Dendritic cell treated with granulocyte-macrophage colony-stimulating factor and Interleukin-4, amounts not matched to agents 40 ng/mL and 50 ng/mL, for 4 days (primary cell): ENCODE measurements at regions of chr4 and their contacts with region 1.

Region 1: DNA sequence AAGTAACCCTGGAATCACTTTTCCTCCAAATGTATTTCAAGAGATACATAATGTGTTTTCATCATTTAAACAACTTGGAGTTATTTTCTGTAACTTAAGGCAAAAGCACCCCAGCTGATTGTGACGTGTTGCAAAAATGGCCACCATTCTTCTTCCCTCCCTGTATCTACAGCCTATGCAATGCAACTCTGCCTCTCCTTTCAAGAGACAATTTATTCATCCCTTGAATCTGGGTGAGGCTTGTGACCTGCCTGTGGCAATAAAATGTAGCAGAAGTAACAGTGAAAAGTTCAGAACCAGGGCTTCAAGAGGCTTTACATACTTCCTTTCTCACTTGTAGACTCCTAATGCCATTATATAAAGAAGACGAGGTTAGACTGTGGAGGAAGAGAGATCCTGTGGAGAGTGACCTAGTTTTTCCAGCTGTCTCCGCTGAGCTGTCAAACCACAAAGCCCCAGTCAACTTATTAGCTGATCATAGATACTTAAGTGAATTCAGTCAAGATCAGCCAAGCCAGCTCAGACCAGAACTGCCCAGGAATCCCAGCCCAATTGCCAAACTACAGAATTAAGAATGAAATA is 81.0 kb upstream of the KLF3 start:
- H3K4me3 Mint-ChIP-seq: no peak overlapping the region
- H3K27ac Mint-ChIP-seq: no peak overlapping the region
- H3K4me1 Mint-ChIP-seq: peaks cover 57% of the 10 kb centered on the region
- H3K27me3 Mint-ChIP-seq: peaks cover 12% of the 10 kb centered on the region

Region 2: DNA sequence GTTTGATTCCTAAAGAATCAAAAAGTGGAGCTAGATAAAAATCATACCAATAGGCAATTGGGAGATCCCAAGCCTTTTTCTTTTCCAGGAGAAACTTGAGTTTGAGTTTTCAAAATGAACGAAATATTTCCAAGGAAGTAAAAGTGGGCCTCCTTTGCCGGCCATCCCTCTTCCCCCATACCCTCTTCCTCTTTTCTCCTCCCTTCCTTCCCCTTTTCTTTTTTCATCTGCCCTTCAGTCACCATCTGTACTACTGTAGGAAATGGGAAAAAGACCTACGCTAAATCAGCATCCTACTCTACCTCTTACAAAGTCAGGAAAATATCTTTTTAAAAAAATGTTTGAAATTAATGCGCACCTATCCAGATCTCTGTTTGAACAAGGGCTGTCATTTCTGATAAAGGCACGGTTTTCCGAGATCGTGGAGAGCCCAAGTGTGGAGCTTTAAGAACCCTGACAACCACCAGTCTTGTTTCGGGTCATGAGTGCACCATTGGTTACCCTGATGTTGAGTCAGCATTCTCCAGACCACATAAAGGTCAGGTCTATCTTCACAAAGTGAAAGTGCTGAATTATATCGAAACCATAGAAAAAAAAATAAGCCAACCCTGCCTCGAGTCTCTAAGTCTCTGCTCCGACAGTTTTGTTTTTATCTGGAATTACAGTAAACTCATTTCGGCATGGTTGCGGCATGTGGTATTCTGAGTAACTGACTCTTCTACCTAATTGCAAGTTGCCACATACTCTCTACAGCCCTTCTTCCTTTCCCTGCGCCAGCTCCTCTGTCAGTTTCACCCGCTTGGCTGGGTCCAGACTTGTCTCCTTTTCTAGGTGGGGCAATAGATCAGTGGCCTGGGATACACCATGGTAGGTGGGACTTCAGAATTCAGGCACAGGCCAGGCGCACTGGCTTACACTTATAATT is 59.2 kb before region 1 on chr4:
- intact Hi-C with region 1: loop called (anchors 5 kb)
- H3K4me3 Mint-ChIP-seq: peak overlapping the region; percentile 52
- H3K27ac Mint-ChIP-seq: peak overlapping the region; percentile 83
- H3K4me1 Mint-ChIP-seq: peaks cover 72% of the 10 kb centered on the region
- H3K27me3 Mint-ChIP-seq: no peaks in the 10 kb centered on the region

Region 3: GRCh38 chr4:38534344-38535045 is 48.5 kb before region 1 on chr4:
- intact Hi-C with region 1: no loop called
- H3K4me3 Mint-ChIP-seq: no peak overlapping the region
- H3K27ac Mint-ChIP-seq: peak overlapping the region; percentile 77
- H3K4me1 Mint-ChIP-seq: peaks cover 50% of the 10 kb centered on the region
- H3K27me3 Mint-ChIP-seq: no peaks in the 10 kb centered on the region

Region 4: DNA sequence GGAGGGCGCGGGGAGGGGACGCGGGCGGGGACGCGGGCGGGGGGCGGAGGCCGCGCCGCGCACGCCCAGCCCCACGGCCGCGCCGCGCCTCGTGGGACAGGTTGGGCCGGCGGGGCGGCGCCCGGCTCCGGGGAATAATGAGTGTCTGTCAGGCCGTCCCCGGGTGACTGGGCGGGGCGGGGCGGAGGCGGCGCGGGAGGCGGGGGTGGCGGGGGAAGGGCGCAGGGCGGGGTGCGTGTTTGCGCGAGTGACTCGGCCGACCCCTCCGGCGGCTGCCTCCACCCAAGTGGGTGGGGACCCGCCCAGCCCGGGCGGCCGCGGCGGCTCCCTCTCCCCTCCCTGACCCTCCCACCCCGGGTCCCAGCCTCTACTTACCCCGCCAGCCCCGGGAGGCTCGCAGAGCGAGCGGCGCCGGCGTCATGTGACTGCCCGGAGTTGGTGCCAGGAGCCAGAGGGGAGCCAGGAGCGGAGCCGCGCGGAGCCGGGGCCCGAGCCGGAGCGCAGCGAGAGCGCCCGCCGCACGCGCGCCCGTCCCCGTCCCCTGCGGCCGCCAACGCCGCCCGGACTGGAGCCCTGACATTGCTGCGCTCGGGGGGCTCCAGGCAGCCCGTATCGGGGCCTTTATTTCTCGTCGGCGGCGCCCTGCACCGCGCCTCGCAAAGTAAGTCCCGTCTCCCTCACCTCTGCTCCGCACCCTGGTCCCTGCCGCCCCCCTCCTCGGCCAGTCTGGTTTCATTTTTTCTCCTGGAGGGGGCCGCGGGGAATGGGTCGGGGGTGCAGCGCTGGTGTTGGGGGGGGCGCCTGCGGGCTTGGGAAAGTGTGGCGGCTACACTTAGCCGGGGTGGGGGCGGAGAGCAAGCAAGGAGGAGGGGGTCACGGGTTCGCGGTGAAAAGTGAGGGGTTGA is 81.1 kb after region 1 on chr4 and contains the start of gene KLF3:
- intact Hi-C with region 1: loop called (anchors 5 kb)
- H3K4me3 Mint-ChIP-seq: peak within 1 kb of the TSS; percentile 93
- H3K27ac Mint-ChIP-seq: peak within 1 kb of the TSS; percentile 87
- H3K4me1 Mint-ChIP-seq: peaks cover 49% of the 10 kb centered on the region
- H3K27me3 Mint-ChIP-seq: no peaks in the 10 kb centered on the region

Region 5: DNA sequence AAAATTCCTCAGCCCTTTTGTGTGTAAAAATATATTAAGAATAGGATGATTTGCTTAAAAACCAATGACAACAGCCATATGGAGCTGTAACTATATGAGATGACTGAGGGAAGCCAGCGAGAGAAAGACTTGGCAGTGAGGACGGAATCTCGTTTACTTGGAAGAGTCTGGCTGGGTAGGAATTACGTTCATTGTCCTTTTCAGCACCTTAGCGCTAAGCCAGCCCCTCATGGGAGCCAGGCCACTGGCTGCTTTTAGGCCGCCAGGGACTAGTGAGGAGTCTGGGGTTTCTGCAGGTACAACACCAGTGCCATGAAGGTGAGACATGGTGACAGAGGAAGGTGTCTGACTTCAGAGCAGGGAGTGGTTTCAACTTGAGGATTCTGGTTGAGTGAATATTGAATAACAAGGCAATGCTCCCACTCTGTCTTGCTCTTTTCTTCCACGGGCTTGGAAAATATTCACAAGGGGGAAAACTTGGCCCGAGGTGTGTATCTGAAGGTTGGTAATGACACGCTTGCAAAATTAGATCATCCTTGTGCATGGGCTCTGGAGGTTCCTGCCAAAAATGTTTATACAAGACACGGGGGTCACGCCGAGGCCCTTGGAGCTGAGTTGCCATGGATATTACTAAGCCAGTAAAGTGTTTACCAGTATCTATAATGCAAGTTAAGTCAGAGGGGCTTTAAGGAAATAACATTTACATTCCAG is 98.5 kb after region 1 on chr4:
- intact Hi-C with region 1: no loop called
- H3K4me3 Mint-ChIP-seq: no peak overlapping the region
- H3K27ac Mint-ChIP-seq: no peak overlapping the region
- H3K4me1 Mint-ChIP-seq: peaks cover 39% of the 10 kb centered on the region
- H3K27me3 Mint-ChIP-seq: no peaks in the 10 kb centered on the region